Transverse colon (tissue), 4 donors: ENCODE measurements at regions of chr12 and their contacts with region 1.

Region 1: DNA sequence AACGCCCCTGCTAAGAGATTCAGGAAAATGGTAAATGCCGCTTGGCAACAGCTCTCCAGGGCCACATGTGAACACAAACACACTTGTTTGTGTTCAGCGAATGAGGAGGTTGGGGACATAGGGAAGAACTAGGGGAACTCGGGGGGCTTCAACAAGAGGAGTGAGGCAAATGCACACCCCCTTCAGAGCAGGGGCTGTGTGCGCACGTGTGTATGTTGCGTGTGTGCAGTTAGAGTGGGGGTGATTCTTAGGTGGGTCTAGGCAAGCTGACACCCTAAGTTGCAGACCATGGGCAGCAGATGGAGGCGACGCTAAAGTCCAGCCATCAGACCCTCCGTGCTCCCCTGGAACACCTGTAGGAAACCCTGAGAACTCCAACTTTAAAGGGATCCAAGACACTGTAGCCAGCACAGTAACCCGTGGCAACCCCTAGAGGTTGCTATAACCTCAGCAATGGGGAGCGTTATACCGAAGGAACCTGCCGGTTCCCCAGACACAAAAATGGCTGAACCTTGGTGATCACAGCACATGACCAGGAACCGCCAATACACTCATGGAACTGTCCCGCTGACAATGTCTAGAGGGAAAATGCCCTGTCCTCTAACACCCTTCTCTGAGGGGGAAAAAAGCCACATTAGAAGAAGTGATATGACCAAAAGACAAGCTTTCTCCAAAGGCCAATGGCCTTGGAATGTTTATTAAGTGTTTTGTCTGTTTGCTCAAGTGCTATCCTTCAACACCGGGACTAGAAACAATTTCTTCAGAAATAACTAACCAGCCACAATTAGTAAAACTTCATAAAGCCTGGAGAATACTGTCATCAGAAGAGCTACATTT is 86.5 kb upstream of the CEP83 start:
- DNase-seq: peak; percentile 65
- H3K4me3 ChIP-seq: no peak overlapping the region
- H3K27ac ChIP-seq: no peak overlapping the region
- H3K4me1 ChIP-seq: peaks cover 0 to 3% (median 0%) of the 10 kb centered on the region in 4 donors
- H3K27me3 ChIP-seq: no peaks in the 10 kb centered on the region
- CTCF ChIP-seq: peak; percentile 71 to 89 (median 81)
- EP300 ChIP-seq: no peak
- POLR2A ChIP-seq: no peak

Region 2: GRCh38 chr12:93060666-93061471 is 1485.3 kb before region 1 on chr12:
- in situ Hi-C with region 1: no loop called
- intact Hi-C with region 1: loop called (anchors 5 kb)
- DNase-seq: no peak
- H3K4me3 ChIP-seq: no peak overlapping the region
- H3K27ac ChIP-seq: peak overlapping the region; percentile 48 to 77 (median 60)
- H3K4me1 ChIP-seq: peaks cover 5 to 26% (median 12%) of the 10 kb centered on the region in 4 donors
- H3K27me3 ChIP-seq: no peaks in the 10 kb centered on the region
- CTCF ChIP-seq: no peak
- EP300 ChIP-seq: no peak
- POLR2A ChIP-seq: no peak

Region 3: GRCh38 chr12:94649349-94650142 is 103.4 kb after region 1 on chr12:
- in situ Hi-C with region 1: no loop called
- intact Hi-C with region 1: loop called (anchors 10 kb)
- DNase-seq: peak; percentile 66
- H3K4me3 ChIP-seq: peak overlapping the region; percentile 34 to 85 (median 74)
- H3K27ac ChIP-seq: peak overlapping the region; percentile 71 to 87 (median 78)
- H3K4me1 ChIP-seq: peaks cover 0 to 14% (median 7%) of the 10 kb centered on the region in 4 donors
- H3K27me3 ChIP-seq: no peaks in the 10 kb centered on the region
- CTCF ChIP-seq: peak in 4 of 5 experiments; percentile 31 to 62 (median 52)
- EP300 ChIP-seq: no peak
- POLR2A ChIP-seq: no peak

Region 4: DNA sequence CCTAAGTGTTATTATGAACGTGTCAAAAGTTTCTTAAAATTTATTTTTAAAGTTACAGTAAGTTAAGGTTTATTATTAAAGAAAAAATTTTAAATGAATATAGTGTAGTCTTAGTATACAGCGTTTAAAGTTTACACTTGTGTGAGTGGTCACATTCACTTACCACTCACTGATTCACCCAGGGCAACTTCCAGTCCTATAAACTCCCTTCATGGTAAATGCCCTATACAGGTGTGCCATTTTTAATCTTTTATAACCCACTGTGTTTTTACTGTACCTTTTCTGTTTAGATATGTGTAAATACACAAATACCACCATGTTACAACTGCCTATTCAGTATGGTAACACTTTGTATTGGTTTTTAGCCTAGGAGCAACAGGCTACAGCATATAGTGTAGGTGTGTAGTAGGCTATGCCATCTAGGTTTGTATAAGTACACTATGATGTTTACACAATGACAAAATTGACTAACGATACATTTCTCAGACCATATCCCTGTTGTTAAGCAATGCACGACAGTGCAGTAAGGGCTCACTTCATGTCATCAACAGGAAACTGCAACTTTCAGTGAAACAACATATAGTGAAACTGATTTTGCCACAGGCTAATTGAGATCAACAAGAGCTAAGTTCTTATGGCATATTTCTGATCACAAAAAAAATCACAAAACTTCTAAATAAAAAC is 216.2 kb after region 1 on chr12:
- in situ Hi-C with region 1: loop called in 1 of 4 experiments (anchors 25 kb)
- intact Hi-C with region 1: loop called (anchors 10 kb)
- DNase-seq: no peak
- H3K4me3 ChIP-seq: no peak overlapping the region
- H3K27ac ChIP-seq: peak overlapping the region; percentile 3 to 50 (median 16)
- H3K4me1 ChIP-seq: peaks cover 0 to 7% (median 2%) of the 10 kb centered on the region in 4 donors
- H3K27me3 ChIP-seq: no peaks in the 10 kb centered on the region
- CTCF ChIP-seq: no peak
- EP300 ChIP-seq: no peak
- POLR2A ChIP-seq: no peak